Left lung (tissue), 14 donors: ENCODE measurements at regions of chr3 and their contacts with region 1.

Region 1: GRCh38 chr3:24237971-24238767 is 256.5 kb downstream of the THRB start:
- DNase-seq: peak in 1 of 4 donors; percentile 72
- ATAC-seq: peak; percentile 94
- H3K4me3 ChIP-seq: no peak overlapping the region
- H3K27ac ChIP-seq: no peak overlapping the region
- H3K4me1 ChIP-seq: peaks cover 0 to 6% of the 10 kb centered on the region in 2 donors
- H3K27me3 ChIP-seq: no peaks in the 10 kb centered on the region
- CTCF ChIP-seq: peak in 1 of 2 donors; percentile 32

Region 2: GRCh38 chr3:23999012-23999641 is 239.0 kb before region 1 on chr3:
- intact Hi-C with region 1: loop called in 1 of 2 experiments (anchors 10 kb)
- DNase-seq: peak in 3 of 4 donors; percentile 44 to 76 (median 69)
- ATAC-seq: peak; percentile 77
- H3K4me3 ChIP-seq: no peak overlapping the region
- H3K27ac ChIP-seq: no peak overlapping the region
- H3K4me1 ChIP-seq: peaks cover 0 to 7% of the 10 kb centered on the region in 2 donors
- H3K27me3 ChIP-seq: no peaks in the 10 kb centered on the region
- CTCF ChIP-seq: peak; percentile 71 to 84

Region 3: DNA sequence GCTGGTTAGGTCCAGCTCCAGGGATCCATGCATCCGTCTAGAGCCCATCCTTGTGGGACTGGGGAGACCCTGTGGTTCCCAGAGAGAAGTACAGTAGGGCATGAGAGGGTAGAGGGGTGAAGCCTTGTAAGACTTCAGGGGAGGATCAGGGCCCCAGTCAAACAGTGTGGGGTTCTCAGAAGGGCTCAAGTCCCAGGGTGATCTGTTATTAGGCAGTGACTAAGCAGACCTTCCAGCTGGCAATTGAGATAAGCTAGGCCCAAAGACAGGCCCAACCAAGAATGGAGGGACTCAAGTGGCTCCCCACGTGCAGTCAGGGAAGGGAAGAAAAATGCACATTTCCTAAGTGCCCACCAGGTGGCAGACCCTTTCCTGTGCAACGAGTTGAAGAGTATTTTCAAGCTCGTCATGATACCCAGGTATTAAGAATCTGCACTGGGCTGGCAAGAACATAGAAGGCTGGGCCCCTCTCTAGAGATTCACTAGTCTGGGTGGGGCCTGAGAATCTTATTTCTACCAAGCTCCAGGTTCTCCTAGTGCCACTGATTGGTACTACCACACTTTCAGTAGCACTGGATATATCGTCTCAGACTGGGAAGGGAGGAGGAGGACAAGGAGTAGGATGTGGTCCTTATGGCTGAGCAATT is 52.3 kb before region 1 on chr3:
- intact Hi-C with region 1: no loop called
- DNase-seq: peak in 2 of 4 donors; percentile 18 to 61
- ATAC-seq: peak; percentile 69
- H3K4me3 ChIP-seq: no peak overlapping the region
- H3K27ac ChIP-seq: no peak overlapping the region
- H3K4me1 ChIP-seq: no peaks in the 10 kb centered on the region
- H3K27me3 ChIP-seq: no peaks in the 10 kb centered on the region
- CTCF ChIP-seq: peak; percentile 42 to 63